Right cardiac atrium (tissue), 5 donors: ENCODE measurements at regions of chr6 and their contacts with region 1.

Region 1: DNA sequence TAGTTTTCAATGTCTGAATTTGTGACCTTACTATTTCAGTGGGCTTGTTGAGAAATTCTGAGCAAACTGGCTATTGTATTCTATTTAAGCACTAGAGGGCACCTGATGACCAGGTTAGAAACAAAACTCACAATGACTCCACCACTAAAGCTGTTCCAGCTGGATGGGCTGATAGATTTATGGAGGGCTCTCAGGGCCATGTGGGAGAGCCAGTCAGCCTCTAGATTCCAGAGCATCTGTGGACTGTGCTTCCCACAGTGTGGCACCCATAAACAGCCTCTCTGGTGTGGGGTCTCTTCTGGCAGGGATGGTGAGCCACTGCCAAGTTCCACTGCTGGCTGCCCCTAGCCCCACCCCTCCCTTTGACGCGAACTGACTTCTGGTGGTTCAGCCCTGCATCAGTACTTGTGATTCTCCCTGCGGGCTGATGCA is 29.2 kb downstream of the C6orf58 start:
- DNase-seq: no peak
- ATAC-seq: peak in 1 of 2 donors; percentile 45
- H3K4me3 ChIP-seq: no peak overlapping the region
- H3K27ac ChIP-seq: no peak overlapping the region
- H3K4me1 ChIP-seq: peaks cover 3% of the 10 kb centered on the region
- H3K27me3 ChIP-seq: no peaks in the 10 kb centered on the region

Region 2: DNA sequence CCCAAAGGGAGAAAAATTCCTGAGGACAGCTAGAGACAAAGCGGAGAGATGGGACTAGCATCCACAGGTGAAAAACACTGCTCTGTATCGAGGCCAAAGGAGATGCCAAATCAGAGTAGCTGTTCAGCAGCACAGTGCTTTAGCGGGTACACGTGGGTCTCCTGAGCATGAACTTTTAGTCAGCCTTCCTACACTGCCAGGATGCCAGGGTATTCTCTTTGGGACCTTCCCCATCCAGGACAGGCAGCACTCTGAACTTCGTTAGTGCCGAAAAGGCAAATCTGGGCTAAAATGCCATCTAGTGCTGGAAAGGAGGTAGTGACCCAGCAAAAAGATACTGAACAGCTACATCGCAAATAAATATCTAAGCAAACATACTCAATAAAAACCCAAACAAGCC is 35.8 kb after region 1 on chr6:
- intact Hi-C with region 1: loop called in 1 of 4 experiments (anchors 5 kb)
- DNase-seq: no peak
- ATAC-seq: peak in 1 of 2 donors; percentile 32
- H3K4me3 ChIP-seq: no peak overlapping the region
- H3K27ac ChIP-seq: no peak overlapping the region
- H3K4me1 ChIP-seq: no peaks in the 10 kb centered on the region
- H3K27me3 ChIP-seq: no peaks in the 10 kb centered on the region